CD14-positive monocyte (primary cell): ENCODE measurements at regions of chr2 and their contacts with region 1.

Region 1: GRCh38 chr2:105235388-105236054 is 6.0 kb upstream of the GPR45 start:
- DNase-seq: peak; percentile 14 to 50 (median 39)
- H3K4me3 ChIP-seq: no peak overlapping the region
- H3K4me3 Mint-ChIP-seq: no peak overlapping the region
- H3K27ac ChIP-seq: no peak overlapping the region
- H3K27ac Mint-ChIP-seq: no peak overlapping the region
- H3K4me1 ChIP-seq: no peaks in the 10 kb centered on the region
- H3K4me1 Mint-ChIP-seq: peaks cover 17% of the 10 kb centered on the region
- H3K27me3 ChIP-seq: peaks cover 0 to 4% of the 10 kb centered on the region in 2 donors
- H3K27me3 Mint-ChIP-seq: peaks cover 8 to 21% (median 18%) of the 10 kb centered on the region in 3 donors
- CTCF ChIP-seq: peak; percentile 78

Region 2: DNA sequence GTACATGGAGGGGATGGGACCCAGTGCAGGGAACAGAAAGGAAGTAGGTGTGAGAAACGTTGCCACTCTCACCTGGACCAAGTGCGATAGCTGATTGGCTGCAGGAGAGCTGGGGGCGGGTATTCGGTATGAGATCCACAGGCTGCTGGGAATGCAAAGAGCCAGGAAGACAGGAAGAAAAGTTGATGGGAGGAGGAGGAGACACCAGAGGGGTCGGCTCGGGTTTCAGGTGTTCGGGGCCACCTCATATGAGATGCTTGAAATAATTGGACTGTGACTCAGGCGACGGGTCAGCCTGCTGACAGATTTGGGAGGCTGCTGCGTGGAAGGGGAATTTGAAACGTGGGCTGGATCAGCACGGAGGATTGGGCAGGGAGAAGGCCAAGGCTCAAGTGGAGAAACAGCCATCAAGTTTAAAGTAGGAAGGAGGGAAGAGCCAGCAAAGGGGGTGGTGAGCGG is 132.5 kb before region 1 on chr2:
- intact Hi-C with region 1: no loop called
- DNase-seq: no peak
- H3K4me3 ChIP-seq: no peak overlapping the region
- H3K4me3 Mint-ChIP-seq: no peak overlapping the region
- H3K27ac ChIP-seq: no peak overlapping the region
- H3K27ac Mint-ChIP-seq: peak overlapping the region in 1 of 7 donors; percentile 17
- H3K4me1 ChIP-seq: peaks cover 14 to 22% of the 10 kb centered on the region in 2 donors
- H3K4me1 Mint-ChIP-seq: peaks cover 27% of the 10 kb centered on the region
- H3K27me3 ChIP-seq: no peaks in the 10 kb centered on the region
- H3K27me3 Mint-ChIP-seq: peaks cover 0 to 2% (median 0%) of the 10 kb centered on the region in 3 donors
- CTCF ChIP-seq: no peak

Region 3: DNA sequence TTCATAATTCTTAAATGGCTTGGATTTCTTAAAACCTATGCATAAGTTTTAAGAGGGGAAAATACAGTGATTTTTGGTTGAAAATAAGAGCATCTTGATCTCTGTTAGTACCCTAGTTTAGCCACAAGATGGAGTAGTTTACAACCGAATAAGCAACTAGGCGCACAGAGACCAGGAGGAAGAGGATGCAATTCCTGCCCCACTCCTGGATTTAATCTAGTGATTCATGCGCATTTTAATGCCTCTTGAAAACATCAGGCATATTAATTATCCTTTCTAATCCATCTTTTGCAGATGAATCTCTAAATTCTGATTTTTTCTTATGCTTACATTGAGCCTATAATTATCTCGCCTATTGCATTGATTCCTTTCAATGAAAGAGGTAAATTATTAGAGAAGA is 121.0 kb before region 1 on chr2:
- intact Hi-C with region 1: loop called (anchors 2 to 5 kb)
- DNase-seq: peak; percentile 11 to 40 (median 32)
- H3K4me3 ChIP-seq: no peak overlapping the region
- H3K4me3 Mint-ChIP-seq: no peak overlapping the region
- H3K27ac ChIP-seq: no peak overlapping the region
- H3K27ac Mint-ChIP-seq: no peak overlapping the region
- H3K4me1 ChIP-seq: no peaks in the 10 kb centered on the region
- H3K4me1 Mint-ChIP-seq: peaks cover 3% of the 10 kb centered on the region
- H3K27me3 ChIP-seq: no peaks in the 10 kb centered on the region
- H3K27me3 Mint-ChIP-seq: peaks cover 0 to 3% (median 1%) of the 10 kb centered on the region in 3 donors
- CTCF ChIP-seq: peak; percentile 81